ENCODE measurements at regions of chr17 and their contacts with region 1.

Region 1: DNA sequence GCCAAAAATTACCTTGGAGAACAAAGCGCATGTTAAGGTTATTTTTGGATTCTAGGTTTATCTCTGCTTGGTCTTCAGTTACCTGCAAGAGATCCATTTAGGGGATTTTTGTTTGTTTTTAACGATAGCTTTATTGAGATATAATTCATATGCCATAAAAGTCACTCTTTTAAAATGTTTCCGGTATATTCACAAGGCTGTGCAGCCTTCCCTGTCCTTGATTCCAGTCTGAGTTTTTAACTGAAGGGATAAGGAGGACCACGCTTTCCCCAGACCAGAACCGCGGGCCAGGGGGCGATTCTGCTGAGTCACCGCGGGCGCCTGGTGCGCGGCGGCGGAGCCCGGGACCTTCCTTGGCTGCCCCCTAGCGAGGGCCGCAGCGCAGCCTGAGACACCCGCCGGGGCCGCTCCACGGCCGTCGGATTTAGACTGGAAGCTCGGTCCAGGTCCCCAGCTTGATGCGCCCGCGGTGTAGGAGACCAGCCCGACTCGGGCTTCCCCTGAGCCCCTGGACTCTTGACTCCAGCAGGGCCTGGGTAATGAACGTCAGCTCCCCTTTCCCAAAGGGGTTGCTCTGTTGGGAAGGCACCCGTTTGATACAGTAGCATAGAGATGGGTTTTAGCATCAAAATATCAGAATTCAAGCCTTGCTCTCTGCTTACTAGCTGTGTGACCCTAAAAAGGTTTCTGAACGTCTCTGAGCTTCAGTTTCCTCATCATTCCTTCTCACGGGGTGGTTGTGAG is 50.0 kb upstream of the STH start:
- DNase-seq: peak; percentile 88
- CTCF ChIP-seq: peak; percentile 72

Region 2: GRCh38 chr17:45961206-45961605 is 12.2 kb after region 1 on chr17:
- CTCF ChIA-PET with region 1: interaction called, 12 read pairs
- POLR2A ChIA-PET with region 1: no interaction called
- DNase-seq: no peak
- CTCF ChIP-seq: no peak

Region 3: DNA sequence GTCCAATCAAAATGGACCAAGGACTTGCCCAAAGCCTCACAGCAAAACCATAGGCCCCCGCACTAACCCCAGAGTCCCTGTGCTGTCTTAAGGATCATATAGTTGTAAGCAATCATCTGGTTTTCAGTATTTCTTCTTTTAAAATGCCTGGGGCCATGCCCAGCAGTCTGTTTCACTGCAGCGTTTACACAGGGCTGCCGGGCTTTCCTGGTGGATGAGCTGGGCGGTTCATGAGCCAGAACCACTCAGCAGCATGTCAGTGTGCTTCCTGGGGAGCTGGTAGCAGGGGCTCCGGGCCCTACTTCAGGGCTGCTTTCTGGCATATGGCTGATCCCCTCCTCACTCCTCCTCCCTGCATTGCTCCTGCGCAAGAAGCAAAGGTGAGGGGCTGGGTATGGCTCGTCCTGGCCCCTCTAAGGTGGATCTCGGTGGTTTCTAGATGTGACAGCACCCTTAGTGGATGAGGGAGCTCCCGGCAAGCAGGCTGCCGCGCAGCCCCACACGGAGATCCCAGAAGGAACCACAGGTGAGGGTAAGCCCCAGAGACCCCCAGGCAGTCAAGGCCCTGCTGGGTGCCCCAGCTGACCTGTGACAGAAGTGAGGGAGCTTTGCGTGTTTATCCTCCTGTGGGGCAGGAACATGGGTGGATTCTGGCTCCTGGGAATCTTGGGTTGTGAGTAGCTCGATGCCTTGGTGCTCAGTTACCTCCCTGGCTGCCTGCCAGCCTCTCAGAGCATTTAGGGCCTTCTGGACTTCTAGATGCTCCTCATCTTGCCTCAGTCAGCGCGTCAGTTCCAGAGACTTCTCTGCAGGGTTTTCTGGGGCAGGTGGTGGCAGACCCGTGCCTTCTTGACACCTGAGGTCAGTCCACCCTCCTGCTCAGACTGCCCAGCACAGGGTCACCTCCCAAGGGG is 25.1 kb after region 1 on chr17:
- CTCF ChIA-PET with region 1: interaction called, 11 read pairs
- POLR2A ChIA-PET with region 1: no interaction called
- DNase-seq: no peak
- CTCF ChIP-seq: no peak

Measured in GM10248 (cell line).